ENCODE measurements at regions of chr5 and their contacts with region 1.

Region 1: GRCh38 chr5:74945561-74946165 is 79.5 kb upstream of the FAM169A start:
- DNase-seq: peak; percentile 11
- H3K4me3 Mint-ChIP-seq: no peak overlapping the region
- H3K27ac Mint-ChIP-seq: peak overlapping the region; percentile 20
- H3K4me1 Mint-ChIP-seq: peaks cover 11% of the 10 kb centered on the region
- H3K27me3 Mint-ChIP-seq: peaks cover 33% of the 10 kb centered on the region

Region 2: GRCh38 chr5:74185599-74185998 is 760.1 kb before region 1 on chr5:
- intact Hi-C with region 1: no loop called
- DNase-seq: no peak
- H3K4me3 Mint-ChIP-seq: no peak overlapping the region
- H3K27ac Mint-ChIP-seq: no peak overlapping the region
- H3K4me1 Mint-ChIP-seq: no peaks in the 10 kb centered on the region
- H3K27me3 Mint-ChIP-seq: peaks cover 10% of the 10 kb centered on the region

Region 3: DNA sequence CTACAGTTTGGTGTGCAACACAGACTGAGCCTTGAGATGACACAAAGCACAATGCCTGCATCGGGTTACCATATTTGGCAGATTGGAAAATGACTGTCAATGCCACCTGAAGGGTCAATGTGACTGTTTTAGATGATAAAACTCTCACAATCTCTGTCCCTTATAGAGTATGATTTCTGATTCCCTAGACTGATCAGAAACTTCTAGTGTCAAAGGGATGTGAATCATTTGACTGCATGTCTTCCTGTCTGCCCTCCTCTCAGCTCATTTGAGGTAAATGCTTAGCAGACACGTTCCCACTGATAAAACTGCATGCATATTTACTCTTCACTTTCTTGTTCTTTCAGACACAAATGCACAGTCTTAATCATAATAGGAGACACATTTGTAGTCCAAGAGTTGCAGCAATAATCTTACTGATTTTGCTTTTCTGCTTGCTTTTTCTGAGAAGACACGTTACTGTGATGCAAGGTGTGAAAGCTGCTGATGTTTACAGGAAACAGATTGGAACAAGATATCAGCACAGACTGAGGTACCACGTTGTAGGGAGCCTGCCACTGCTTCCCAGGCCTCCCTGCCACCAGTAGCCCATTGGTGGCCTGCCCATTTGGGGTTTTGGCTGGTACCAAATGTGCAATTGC is 28.9 kb after region 1 on chr5:
- intact Hi-C with region 1: loop called (anchors 1 kb)
- DNase-seq: peak; percentile 1
- H3K4me3 Mint-ChIP-seq: no peak overlapping the region
- H3K27ac Mint-ChIP-seq: peak overlapping the region; percentile 80
- H3K4me1 Mint-ChIP-seq: peaks cover 39% of the 10 kb centered on the region
- H3K27me3 Mint-ChIP-seq: no peaks in the 10 kb centered on the region

Region 4: GRCh38 chr5:75320341-75320740 is 374.7 kb after region 1 on chr5:
- intact Hi-C with region 1: loop called (anchors 1 kb)
- DNase-seq: no peak
- H3K4me3 Mint-ChIP-seq: no peak overlapping the region
- H3K27ac Mint-ChIP-seq: no peak overlapping the region
- H3K4me1 Mint-ChIP-seq: peaks cover 13% of the 10 kb centered on the region
- H3K27me3 Mint-ChIP-seq: peaks cover 2% of the 10 kb centered on the region

Measured in activated T-helper 1 cell treated with anti-CD3 and anti-CD28 coated beads, Interleukin-12 subunit alpha, Interleukin-12 subunit beta, Interleukin-2, Interleukin-4 antibody, amounts not matched to agents 30 ng/mL and 10 ng/mL and 1 ng/mL, durations not matched to agents 14 hours and 24 hours and 36 hours (primary cell).